T-cell (primary cell): ENCODE measurements at regions of chr12 and their contacts with region 1.

Region 1: GRCh38 chr12:101839324-101840283 is 8.8 kb upstream of the GNPTAB start:
- DNase-seq: peak; percentile 25 to 87 (median 59)
- ATAC-seq: peak; percentile 73 to 84 (median 79)
- H3K4me3 ChIP-seq: no peak overlapping the region
- H3K4me3 Mint-ChIP-seq: no peak overlapping the region
- H3K27ac ChIP-seq: no peak overlapping the region
- H3K27ac Mint-ChIP-seq: peak overlapping the region in 1 of 2 donors; percentile 66
- H3K4me1 ChIP-seq: peaks cover 5 to 17% of the 10 kb centered on the region in 2 experiments
- H3K4me1 Mint-ChIP-seq: peaks cover 8 to 16% (median 14%) of the 10 kb centered on the region in 3 donors
- H3K27me3 ChIP-seq: no peaks in the 10 kb centered on the region
- H3K27me3 Mint-ChIP-seq: no peaks in the 10 kb centered on the region

Region 2: DNA sequence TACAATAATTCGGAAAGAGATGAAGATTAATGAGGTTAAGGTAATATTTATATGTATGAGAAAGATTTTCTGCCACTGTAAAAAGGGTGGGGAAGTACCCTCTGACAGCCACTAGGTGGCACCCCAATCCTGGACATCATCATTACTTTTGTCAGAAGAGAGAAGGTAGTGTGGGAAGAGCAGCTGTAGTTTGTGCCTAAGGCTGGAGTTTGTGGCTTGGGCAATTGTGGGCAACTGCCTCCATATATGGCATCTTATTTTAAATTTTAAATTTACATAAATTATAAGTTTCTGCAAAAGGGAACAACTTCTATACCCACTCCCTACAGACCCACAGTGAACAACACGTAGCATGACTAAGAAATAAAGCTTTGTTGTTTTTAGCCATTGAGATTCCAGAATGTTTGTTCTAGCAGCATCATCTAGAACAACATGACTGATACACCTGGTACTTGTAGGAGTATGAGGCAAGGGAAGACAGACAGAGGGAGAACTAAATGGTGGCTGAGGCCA is 65.9 kb before region 1 on chr12:
- CTCF ChIA-PET with region 1: interaction called, 58 to 62 read pairs
- POLR2A ChIA-PET with region 1: interaction called in 1 of 2 experiments, 8 read pairs
- DNase-seq: peak; percentile 32 to 85 (median 60)
- ATAC-seq: peak; percentile 84 to 94 (median 90)
- H3K4me3 ChIP-seq: no peak overlapping the region
- H3K4me3 Mint-ChIP-seq: no peak overlapping the region
- H3K27ac ChIP-seq: no peak overlapping the region
- H3K27ac Mint-ChIP-seq: no peak overlapping the region
- H3K4me1 ChIP-seq: no peaks in the 10 kb centered on the region
- H3K4me1 Mint-ChIP-seq: peaks cover 0 to 7% (median 5%) of the 10 kb centered on the region in 3 donors
- H3K27me3 ChIP-seq: no peaks in the 10 kb centered on the region
- H3K27me3 Mint-ChIP-seq: no peaks in the 10 kb centered on the region

Region 3: GRCh38 chr12:101780599-101780998 is 59.0 kb before region 1 on chr12:
- CTCF ChIA-PET with region 1: interaction called, 12 to 16 read pairs
- POLR2A ChIA-PET with region 1: no interaction called
- DNase-seq: no peak
- ATAC-seq: no peak
- H3K4me3 ChIP-seq: no peak overlapping the region
- H3K4me3 Mint-ChIP-seq: no peak overlapping the region
- H3K27ac ChIP-seq: no peak overlapping the region
- H3K27ac Mint-ChIP-seq: peak overlapping the region in 1 of 2 donors; percentile 73
- H3K4me1 ChIP-seq: no peaks in the 10 kb centered on the region
- H3K4me1 Mint-ChIP-seq: peaks cover 2 to 8% (median 6%) of the 10 kb centered on the region in 3 donors
- H3K27me3 ChIP-seq: no peaks in the 10 kb centered on the region
- H3K27me3 Mint-ChIP-seq: no peaks in the 10 kb centered on the region

Region 4: GRCh38 chr12:101876861-101877815 is 37.5 kb after region 1 on chr12 and contains the start of gene DRAM1:
- CTCF ChIA-PET with region 1: no interaction called
- POLR2A ChIA-PET with region 1: interaction called in 1 of 2 experiments, 11 read pairs
- DNase-seq: peak; percentile 40 to 80 (median 60)
- ATAC-seq: peak; percentile 80 to 86 (median 85)
- H3K4me3 ChIP-seq: peak within 1 kb of the TSS; percentile 80 to 92
- H3K4me3 Mint-ChIP-seq: peak within 1 kb of the TSS; percentile 84 to 94 (median 88)
- H3K27ac ChIP-seq: peak within 1 kb of the TSS; percentile 81
- H3K27ac Mint-ChIP-seq: peak within 1 kb of the TSS; percentile 73 to 74
- H3K4me1 ChIP-seq: peaks cover 0 to 15% of the 10 kb centered on the region in 2 experiments
- H3K4me1 Mint-ChIP-seq: peaks cover 11% of the 10 kb centered on the region in 3 donors
- H3K27me3 ChIP-seq: no peaks in the 10 kb centered on the region
- H3K27me3 Mint-ChIP-seq: no peaks in the 10 kb centered on the region
- total RNA-seq, gene DRAM1: 1.4 to 3.8 (median 1.9) TPM